Ascending aorta (tissue), 2 donors: ENCODE measurements at regions of chr3 and their contacts with region 1.

Region 1: DNA sequence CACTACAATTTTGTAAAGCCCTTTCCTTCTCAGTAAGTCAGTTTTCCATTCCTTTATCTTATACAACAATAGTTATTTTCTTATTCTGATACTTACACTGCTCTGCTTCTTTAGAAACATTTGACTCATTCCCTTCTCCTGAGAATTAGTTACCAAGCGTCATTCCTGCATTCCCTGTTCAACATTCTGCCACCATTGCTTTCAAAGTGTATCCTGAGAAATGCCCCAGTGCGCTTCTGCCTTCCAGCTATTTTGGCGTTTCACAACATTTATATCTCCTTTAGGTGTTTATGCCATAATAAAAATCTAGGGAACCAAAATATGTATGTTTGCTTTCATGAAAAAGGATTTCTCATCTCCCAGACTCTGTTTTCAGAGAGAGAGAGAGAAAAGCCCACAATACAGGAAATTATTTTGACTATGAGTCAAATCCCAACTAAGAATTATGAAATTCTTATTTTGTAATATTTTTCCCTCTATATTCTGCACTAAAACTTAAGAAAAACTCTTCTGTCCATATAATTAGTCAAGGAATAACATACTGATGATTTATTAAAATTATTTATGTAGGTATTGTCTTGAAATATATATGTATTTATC is 118.2 kb upstream of the RAP2B start:
- DNase-seq: no peak
- H3K4me3 ChIP-seq: peak overlapping the region; percentile 18 to 60
- H3K27ac ChIP-seq: peak overlapping the region; percentile 46 to 54
- H3K4me1 ChIP-seq: no peaks in the 10 kb centered on the region
- H3K27me3 ChIP-seq: no peaks in the 10 kb centered on the region
- CTCF ChIP-seq: no peak

Region 2: DNA sequence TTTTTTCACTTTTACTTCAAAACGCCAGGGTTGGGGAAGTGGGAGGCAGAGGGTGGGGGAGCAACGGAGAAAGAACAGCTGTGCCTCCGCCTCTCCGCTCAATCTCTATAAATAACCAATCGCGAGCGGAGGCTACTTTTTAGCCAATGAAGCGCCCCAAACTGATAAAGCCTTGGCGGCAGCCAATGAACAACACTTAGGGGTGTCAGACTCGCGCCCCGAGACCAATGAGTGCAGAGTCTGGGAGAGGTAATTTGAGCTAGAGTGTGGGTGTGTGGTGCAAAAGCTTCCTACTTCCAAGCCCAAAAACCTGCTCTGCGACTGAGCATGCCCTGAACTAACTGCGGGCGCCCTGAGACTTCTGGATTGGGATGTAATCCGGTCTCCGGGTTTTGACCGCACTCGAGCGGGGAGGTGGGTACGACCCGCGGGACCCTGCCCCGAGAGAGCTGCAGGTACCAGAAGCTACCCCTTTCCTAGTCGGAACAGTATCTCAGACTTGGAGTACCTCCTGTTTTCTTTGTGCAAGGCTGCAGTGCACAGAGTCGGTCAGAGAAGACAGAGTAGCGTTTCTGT is 117.4 kb after region 1 on chr3:
- intact Hi-C with region 1: loop called (anchors 1 kb)
- DNase-seq: peak; percentile 95 to 98
- H3K4me3 ChIP-seq: peak overlapping the region; percentile 77 to 78
- H3K27ac ChIP-seq: peak overlapping the region; percentile 92
- H3K4me1 ChIP-seq: peaks cover 0 to 16% of the 10 kb centered on the region in 2 donors
- H3K27me3 ChIP-seq: no peaks in the 10 kb centered on the region
- CTCF ChIP-seq: no peak

Region 3: GRCh38 chr3:153284282-153284938 is 240.6 kb after region 1 on chr3:
- intact Hi-C with region 1: loop called (anchors 10 kb)
- DNase-seq: peak; percentile 55 to 81
- H3K4me3 ChIP-seq: no peak overlapping the region
- H3K27ac ChIP-seq: no peak overlapping the region
- H3K4me1 ChIP-seq: no peaks in the 10 kb centered on the region
- H3K27me3 ChIP-seq: no peaks in the 10 kb centered on the region
- CTCF ChIP-seq: no peak

Region 4: GRCh38 chr3:153595186-153595815 is 551.5 kb after region 1 on chr3:
- intact Hi-C with region 1: loop called (anchors 5 kb)
- DNase-seq: no peak
- H3K4me3 ChIP-seq: no peak overlapping the region
- H3K27ac ChIP-seq: no peak overlapping the region
- H3K4me1 ChIP-seq: no peaks in the 10 kb centered on the region
- H3K27me3 ChIP-seq: no peaks in the 10 kb centered on the region
- CTCF ChIP-seq: peak in 2 of 3 experiments; percentile 28 to 51

Region 5: GRCh38 chr3:153927107-153927506 is 883.3 kb after region 1 on chr3:
- intact Hi-C with region 1: loop called (anchors 2 kb)
- DNase-seq: no peak
- H3K4me3 ChIP-seq: no peak overlapping the region
- H3K27ac ChIP-seq: no peak overlapping the region
- H3K4me1 ChIP-seq: no peaks in the 10 kb centered on the region
- H3K27me3 ChIP-seq: no peaks in the 10 kb centered on the region
- CTCF ChIP-seq: no peak

Region 6: GRCh38 chr3:154243353-154243752 is 1199.5 kb after region 1 on chr3:
- intact Hi-C with region 1: loop called (anchors 10 kb)
- DNase-seq: no peak
- H3K4me3 ChIP-seq: no peak overlapping the region
- H3K27ac ChIP-seq: peak overlapping the region; percentile 87 to 88
- H3K4me1 ChIP-seq: peaks cover 4 to 27% of the 10 kb centered on the region in 2 donors
- H3K27me3 ChIP-seq: no peaks in the 10 kb centered on the region
- CTCF ChIP-seq: no peak